Psoas muscle (tissue), 8 donors: ENCODE measurements at regions of chr7 and their contacts with region 1.

Region 1: DNA sequence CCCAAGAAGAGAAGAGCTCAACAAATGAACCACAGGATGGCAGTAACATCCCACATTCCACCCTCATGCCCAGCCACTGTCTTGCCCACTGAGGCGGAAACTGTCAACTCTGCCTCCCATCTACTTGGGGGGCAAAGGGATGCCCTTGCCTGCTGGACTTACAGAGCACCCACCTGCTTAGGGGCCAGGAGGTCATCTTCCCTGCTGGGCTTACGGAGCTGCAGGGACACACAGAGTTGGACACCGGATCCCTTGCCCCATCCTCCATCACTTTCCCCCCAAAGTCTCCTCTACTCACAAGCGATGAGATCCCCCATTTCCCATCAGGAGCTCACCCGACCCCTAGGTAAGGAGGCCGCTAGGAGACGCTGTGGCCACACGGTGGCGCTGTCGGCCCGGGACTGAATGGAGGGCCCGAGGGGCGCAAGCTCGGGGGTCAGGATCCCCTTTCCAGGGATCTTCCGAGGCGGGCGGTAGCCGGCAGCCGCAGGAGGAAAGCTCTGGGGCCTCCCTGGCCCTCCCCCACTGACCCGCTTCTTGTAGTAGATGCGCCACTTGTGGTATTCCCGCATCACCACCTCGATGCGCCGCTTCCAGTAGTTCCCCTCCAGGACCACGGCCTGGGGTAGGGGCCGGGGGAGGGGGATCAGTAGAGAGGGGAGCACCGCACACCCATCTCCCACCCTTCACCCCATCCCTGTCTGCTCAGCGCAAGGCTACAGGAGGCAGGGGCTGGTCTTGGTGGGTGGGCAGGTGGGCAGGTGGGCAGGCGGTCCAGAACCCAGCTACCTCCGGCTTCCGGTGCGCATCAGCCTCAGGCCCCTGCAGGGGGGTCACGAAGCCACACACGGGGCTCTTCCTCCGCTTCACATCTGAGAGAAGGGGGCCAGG is 17.3 kb downstream of the MLXIPL start:
- DNase-seq: peak; percentile 59 to 84
- ATAC-seq: peak; percentile 32 to 68 (median 47)
- H3K4me3 ChIP-seq: no peak overlapping the region
- H3K27ac ChIP-seq: no peak overlapping the region
- H3K4me1 ChIP-seq: peaks cover 10% of the 10 kb centered on the region
- H3K27me3 ChIP-seq: no peaks in the 10 kb centered on the region
- CTCF ChIP-seq: peak; percentile 95

Region 2: DNA sequence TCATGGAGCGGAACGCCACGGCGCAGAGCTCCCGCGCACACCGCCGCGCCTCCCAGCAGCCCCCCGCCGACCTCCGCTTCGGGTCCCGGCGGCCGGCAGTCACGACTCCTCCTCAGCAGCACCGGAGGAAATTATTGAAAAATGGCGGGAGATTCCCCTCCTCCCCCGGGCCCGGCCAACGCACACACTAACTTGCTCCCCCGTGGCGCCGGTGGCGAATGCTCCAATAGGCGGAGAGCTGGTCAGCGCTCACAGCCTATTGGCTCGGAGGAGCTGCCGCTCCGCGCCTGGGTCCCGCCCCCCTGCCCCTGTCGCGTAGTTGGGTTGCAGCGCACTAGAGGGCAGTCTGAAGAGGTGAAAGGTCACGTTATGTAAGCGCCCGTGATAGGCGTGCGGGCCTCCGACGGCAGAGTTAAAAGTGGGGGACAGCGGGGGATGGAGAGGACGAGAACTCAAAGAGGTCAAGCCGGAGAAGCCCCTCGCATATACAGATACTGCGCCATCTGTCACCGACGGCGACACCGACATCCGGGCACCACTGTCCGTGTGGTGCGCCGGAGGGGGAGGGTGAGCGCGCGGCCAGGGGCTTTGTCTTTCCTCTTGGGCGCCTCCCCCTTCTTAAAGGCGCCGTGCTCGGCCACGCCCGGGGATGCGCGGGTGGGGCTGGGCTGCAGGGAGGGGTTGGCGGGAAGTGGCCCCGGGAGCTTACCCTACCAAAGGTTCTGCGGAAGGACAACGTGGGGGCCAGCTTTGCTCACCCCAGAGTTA is 84.8 kb before region 1 on chr7 and contains the start of gene BAZ1B:
- intact Hi-C with region 1: no loop called
- DNase-seq: peak; percentile 99
- ATAC-seq: peak; percentile 98 to 99 (median 98)
- H3K4me3 ChIP-seq: peak within 1 kb of the TSS; percentile 81
- H3K27ac ChIP-seq: peak within 1 kb of the TSS; percentile 96
- H3K4me1 ChIP-seq: peaks cover 30% of the 10 kb centered on the region
- H3K27me3 ChIP-seq: no peaks in the 10 kb centered on the region
- CTCF ChIP-seq: no peak
- total RNA-seq, gene BAZ1B: 39.5 to 49.8 (median 42.3) TPM

Region 3: DNA sequence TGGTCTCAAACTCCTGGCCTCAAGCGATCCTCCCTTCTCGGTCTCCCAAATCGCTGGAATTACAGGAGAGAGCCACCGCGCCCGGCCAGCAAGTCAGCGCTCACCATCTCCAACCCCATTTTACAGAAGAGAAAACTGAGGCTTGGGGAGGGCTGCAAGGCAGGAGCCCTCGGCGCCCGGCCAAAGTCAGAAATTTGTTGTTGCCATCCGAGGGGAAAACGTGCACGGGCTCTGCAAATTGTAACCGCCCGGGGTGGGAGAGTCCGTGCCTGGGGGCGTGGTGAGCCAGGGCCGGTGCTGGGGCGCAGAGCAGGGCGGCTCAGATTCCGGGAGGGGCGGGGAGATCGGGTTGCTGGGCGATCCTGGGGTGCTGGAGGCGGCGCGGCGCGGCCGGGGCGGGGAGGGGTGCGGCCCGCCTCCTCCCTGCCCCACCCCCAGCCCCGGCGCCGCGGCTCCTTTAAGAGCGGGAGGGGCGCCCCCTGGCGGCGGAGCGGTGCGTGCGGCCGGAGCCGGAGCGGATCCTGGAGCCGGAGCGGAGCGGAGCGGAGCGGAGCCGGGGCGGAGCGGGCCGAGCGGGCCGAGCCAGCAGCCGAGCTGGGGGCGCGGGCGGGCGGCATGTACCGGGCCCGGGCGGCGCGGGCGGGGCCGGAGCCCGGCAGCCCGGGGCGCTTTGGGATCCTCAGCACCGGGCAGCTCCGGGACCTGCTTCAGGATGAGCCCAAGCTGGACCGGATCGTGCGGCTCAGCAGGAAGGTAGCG is 60.5 kb after region 1 on chr7 and contains the start of gene VPS37D:
- intact Hi-C with region 1: loop called (anchors 2 to 5 kb)
- DNase-seq: peak; percentile 91 to 94
- ATAC-seq: peak; percentile 95 to 99 (median 96)
- H3K4me3 ChIP-seq: peak within 1 kb of the TSS; percentile 68
- H3K27ac ChIP-seq: no peak within 1 kb of the TSS
- H3K4me1 ChIP-seq: no peaks in the 10 kb centered on the region
- H3K27me3 ChIP-seq: no peaks in the 10 kb centered on the region
- CTCF ChIP-seq: peak; percentile 87
- total RNA-seq, gene VPS37D: 0.18 to 1.1 (median 0.72) TPM

Region 4: DNA sequence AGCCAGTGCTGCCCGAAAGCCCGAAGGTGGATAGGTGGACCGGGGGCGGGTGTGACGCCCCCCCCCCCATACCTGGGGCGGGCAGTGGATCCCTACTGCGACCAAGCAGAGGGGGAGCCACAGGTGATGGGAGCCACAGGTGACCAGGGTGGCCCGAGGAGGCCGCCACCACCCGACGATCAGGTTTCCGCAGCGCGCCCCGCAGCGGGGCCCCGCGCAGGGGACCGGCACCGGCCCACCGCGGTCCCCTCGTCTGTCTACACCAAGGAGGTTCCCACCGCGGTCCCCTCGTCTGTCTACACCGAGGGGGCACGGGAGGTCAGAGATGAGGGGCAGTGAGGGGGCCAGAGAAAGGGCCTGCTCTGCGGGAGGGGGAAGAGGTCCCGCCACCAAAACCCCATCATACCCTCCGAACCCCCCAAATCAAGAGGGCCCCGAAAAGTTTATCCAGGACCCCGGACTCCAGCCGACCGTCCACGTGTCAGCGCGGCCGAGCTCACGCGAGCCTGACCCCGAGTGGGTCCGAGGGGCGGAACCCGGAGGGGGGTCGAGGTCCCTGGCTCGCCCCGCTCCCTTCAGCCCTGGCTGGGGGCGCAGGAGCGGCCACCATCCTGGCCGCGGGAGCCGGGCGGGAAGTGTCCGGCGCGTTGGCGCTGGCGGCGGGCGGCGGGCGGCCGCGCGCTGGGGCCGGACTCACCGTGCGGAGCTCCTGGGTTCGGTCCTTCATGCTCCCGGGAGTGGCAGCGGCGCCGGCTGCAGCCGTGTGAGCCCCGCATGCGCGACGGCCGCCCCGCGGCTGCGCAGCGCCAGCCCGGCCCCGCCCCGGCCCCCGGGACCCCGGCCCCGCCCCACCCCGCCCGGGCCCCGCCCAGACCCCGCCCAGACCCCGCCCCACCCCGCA is 112.1 kb after region 1 on chr7 and contains the start of gene STX1A:
- intact Hi-C with region 1: loop called in 1 of 2 experiments (anchors 2 kb)
- DNase-seq: peak; percentile 72 to 86
- ATAC-seq: peak; percentile 83 to 85 (median 84)
- H3K4me3 ChIP-seq: peak within 1 kb of the TSS; percentile 94
- H3K27ac ChIP-seq: no peak within 1 kb of the TSS
- H3K4me1 ChIP-seq: peaks cover 17% of the 10 kb centered on the region
- H3K27me3 ChIP-seq: no peaks in the 10 kb centered on the region
- CTCF ChIP-seq: no peak
- total RNA-seq, gene STX1A: 1.9 to 3.6 (median 2.6) TPM

Region 5: DNA sequence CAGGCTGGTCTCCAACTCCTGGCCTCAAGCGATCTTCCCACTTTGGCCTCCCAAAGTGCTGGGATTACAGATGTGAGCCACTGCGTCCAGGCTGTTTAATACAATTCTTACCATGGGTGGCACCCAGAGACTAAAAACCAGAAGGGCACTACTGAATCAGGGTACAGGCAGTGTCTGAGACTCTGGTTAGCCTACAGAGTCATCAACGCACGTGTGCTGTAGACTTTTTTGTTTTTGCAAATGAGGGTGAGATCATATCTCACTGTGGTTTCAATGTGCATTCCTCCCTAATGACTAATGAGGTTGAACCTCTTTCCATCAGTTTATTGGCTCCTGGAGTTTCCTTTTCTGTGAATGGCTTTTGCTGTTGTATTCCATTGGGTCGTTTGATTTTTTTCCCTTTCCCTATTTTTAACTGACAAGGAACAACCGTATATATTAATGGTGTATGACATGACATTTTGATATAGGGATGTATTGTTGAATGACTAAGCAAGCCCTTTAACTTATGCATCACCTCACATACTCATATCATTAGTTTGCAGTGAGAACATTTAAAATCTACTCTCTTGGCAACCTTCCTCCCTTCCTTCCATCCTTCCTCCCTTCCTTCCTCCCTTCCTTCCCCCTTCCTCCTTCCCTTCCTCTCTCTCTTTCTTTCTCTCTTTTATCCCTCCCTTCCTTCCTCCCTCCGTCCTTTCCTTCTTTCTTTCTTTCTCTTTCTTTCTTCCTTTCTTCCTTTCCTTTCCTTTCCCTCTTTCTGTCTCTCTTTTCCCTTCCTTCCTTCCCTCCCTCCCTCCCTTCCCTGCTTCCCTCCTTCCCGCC is 244.6 kb after region 1 on chr7:
- intact Hi-C with region 1: loop called in 1 of 2 experiments (anchors 5 kb)
- DNase-seq: no peak
- ATAC-seq: peak; percentile 64 to 76 (median 75)
- H3K4me3 ChIP-seq: no peak overlapping the region
- H3K27ac ChIP-seq: peak overlapping the region; percentile 67
- H3K4me1 ChIP-seq: peaks cover 8% of the 10 kb centered on the region
- H3K27me3 ChIP-seq: peaks cover 0 to 2% (median 0%) of the 10 kb centered on the region in 3 donors
- CTCF ChIP-seq: no peak